Activated CD4-positive, alpha-beta T cell treated with anti-CD3 and anti-CD28 coated beads for 36 hours (primary cell): ENCODE measurements at regions of chr10 and their contacts with region 1.

Region 1: GRCh38 chr10:69215405-69216176 is 4.5 kb upstream of the HKDC1 start:
- DNase-seq: peak; percentile 72
- ATAC-seq: peak; percentile 80
- H3K4me3 Mint-ChIP-seq: peak overlapping the region; percentile 15
- H3K27ac Mint-ChIP-seq: peak overlapping the region; percentile 81
- H3K4me1 Mint-ChIP-seq: peaks cover 36% of the 10 kb centered on the region
- H3K27me3 Mint-ChIP-seq: no peaks in the 10 kb centered on the region

Region 2: GRCh38 chr10:68804692-68805091 is 410.9 kb before region 1 on chr10:
- CTCF ChIA-PET with region 1: no interaction called
- POLR2A ChIA-PET with region 1: no interaction called
- intact Hi-C with region 1: no loop called
- DNase-seq: no peak
- ATAC-seq: no peak
- H3K4me3 Mint-ChIP-seq: no peak overlapping the region
- H3K27ac Mint-ChIP-seq: no peak overlapping the region
- H3K4me1 Mint-ChIP-seq: no peaks in the 10 kb centered on the region
- H3K27me3 Mint-ChIP-seq: no peaks in the 10 kb centered on the region

Region 3: DNA sequence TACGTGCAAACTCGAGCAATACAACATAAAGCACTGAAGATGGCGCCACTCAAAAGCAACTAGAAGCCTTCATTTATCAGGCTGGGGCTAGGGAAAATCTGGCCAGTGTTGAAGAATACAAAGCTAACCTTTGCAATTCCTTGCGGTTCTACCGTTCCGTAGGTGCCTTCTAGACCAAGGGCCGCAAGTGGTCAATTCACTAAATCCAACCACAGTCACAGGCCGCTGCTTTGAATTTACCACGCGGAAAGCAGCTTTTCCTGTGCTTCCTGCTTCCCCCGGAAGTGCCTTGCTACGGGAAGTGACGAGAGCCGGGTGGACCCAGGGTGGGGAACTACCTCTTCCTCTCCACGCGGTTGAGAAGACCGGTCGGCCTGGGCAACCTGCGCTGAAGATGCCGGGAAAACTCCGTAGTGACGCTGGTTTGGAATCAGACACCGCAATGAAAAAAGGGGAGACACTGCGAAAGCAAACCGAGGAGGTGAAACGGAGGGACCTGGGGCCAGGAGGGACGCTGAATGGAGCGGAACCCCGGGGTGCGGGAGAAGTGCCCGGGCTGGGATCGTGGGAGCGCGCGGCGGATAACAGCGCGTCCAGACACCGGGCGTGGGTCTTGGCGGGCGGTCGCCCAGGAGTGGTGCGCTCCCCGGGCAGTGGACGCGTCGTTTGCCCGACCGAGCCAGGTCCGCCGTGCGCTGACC is 259.6 kb before region 1 on chr10 and contains the start of gene DDX21:
- CTCF ChIA-PET with region 1: no interaction called
- POLR2A ChIA-PET with region 1: interaction called, 12 read pairs
- intact Hi-C with region 1: no loop called
- DNase-seq: peak; percentile 94
- ATAC-seq: peak; percentile 85
- H3K4me3 Mint-ChIP-seq: peak within 1 kb of the TSS; percentile 98
- H3K27ac Mint-ChIP-seq: peak within 1 kb of the TSS; percentile 100
- H3K4me1 Mint-ChIP-seq: peaks cover 35% of the 10 kb centered on the region
- H3K27me3 Mint-ChIP-seq: no peaks in the 10 kb centered on the region
- total RNA-seq, gene DDX21: 187 to 192 TPM